Activated CD4-positive, alpha-beta T cell treated with anti-CD3 and anti-CD28 coated beads for 36 hours (primary cell): ENCODE measurements at regions of chr17 and their contacts with region 1.

Region 1: DNA sequence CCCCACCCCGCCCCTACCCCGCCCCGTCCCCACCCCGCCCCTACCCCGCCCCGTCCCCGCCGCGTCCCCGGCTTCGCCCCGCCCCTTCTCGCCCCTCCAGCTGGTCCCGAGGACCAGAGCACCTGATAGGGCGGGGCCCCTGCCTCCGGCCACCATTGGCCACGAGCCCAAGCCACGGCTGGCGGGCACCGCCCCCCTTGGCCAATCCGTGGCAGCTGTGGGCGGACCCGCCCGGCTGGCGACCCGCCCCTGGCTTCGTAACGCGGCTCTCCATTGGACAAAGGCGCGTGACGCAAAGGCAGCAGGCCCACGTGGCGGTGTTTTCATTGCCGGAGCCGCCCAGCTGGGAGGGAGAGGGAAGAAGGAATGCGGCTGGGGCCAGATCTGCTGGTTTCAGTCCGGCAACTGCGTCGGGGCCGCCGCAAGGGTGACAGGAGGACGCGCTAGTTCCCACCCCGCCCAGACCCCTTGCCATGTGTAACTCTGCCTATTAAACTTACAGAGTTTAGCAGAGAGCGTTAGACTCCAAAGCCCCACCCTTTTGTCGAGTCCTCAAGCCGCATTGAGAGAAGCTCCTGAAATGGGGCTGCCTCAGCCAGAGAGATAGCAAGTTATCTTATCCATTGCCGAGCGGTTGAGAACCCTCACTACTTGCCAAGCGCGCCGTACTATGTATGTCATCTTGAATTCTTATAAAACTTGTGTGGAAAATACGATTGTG is 403 bp upstream of the WIPI1 start:
- DNase-seq: peak; percentile 99
- ATAC-seq: peak; percentile 87
- H3K4me3 Mint-ChIP-seq: peak overlapping the region; percentile 64
- H3K27ac Mint-ChIP-seq: peak overlapping the region; percentile 64
- H3K4me1 Mint-ChIP-seq: peaks cover 61% of the 10 kb centered on the region
- H3K27me3 Mint-ChIP-seq: no peaks in the 10 kb centered on the region

Region 2: GRCh38 chr17:67717624-67718329 is 739.9 kb before region 1 on chr17 and contains the start of gene NOL11:
- CTCF ChIA-PET with region 1: no interaction called
- POLR2A ChIA-PET with region 1: no interaction called
- intact Hi-C with region 1: loop called (anchors 5 kb)
- DNase-seq: peak; percentile 100
- ATAC-seq: peak; percentile 96
- H3K4me3 Mint-ChIP-seq: peak within 1 kb of the TSS; percentile 88
- H3K27ac Mint-ChIP-seq: peak within 1 kb of the TSS; percentile 98
- H3K4me1 Mint-ChIP-seq: peaks cover 19% of the 10 kb centered on the region
- H3K27me3 Mint-ChIP-seq: no peaks in the 10 kb centered on the region
- total RNA-seq, gene NOL11: 79.3 to 79.7 TPM

Region 3: DNA sequence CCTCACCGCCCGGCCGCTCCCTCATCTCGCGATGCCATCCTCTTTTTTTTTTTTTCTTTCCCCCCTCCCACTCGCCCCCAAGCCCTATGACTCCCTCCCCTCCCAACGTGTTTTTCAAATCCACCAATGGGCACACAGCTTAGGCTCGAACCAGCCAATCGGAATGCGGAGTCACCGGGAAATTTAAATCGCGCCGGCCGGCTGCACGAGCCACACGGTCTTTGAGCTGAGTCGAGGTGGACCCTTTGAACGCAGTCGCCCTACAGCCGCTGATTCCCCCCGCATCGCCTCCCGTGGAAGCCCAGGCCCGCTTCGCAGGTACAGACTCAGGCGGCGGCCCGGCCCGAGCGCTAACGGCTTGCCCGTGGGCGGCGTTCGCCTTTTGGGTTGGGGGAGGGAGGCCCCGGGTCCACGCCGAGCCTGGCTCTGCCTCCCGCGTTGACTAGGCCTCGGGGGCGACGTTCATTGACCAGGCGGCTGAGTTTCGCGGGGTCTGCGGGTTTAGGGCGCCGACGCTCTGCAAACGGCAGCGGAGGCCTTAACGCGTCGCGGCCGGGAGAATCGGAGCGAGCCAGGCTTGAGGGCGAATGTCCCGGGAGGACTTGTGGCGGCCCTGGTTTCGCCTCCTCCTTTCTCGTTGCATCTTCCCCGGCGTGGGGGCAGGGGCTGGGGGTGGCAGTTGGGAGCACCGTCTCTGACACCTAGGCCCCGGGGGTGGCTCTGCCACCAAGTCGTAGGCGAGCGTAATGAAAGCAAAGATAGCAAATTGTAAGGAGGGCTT is 422.0 kb before region 1 on chr17 and contains the start of gene KPNA2:
- CTCF ChIA-PET with region 1: no interaction called
- POLR2A ChIA-PET with region 1: interaction called, 6 read pairs
- intact Hi-C with region 1: loop called in 1 of 2 experiments (anchors 1 kb)
- DNase-seq: peak; percentile 93
- ATAC-seq: peak; percentile 91
- H3K4me3 Mint-ChIP-seq: peak within 1 kb of the TSS; percentile 96
- H3K27ac Mint-ChIP-seq: peak within 1 kb of the TSS; percentile 97
- H3K4me1 Mint-ChIP-seq: peaks cover 18% of the 10 kb centered on the region
- H3K27me3 Mint-ChIP-seq: no peaks in the 10 kb centered on the region
- total RNA-seq, gene KPNA2: 186 to 190 TPM

Region 4: DNA sequence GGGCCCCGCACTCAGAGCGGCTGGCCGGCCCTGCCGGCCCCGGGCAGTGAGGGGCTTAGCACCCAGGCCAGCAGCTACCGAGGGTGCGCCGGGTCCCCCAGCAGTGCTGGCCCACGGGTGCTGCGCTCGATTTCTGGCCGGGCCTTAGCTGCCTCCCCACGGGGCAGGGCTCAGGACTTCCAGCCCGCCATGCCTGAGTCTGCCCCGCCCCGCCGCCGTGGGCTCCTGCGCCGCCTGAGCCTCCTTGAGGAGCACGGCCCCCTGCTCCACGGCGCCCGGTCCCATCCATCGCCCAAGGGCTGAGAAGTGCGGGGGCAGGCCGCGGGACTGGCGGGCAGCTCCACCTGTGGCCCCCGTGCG is 277.8 kb before region 1 on chr17:
- CTCF ChIA-PET with region 1: interaction called, 5 read pairs
- POLR2A ChIA-PET with region 1: interaction called, 4 read pairs
- intact Hi-C with region 1: loop called in 1 of 2 experiments (anchors 2 kb)
- DNase-seq: no peak
- ATAC-seq: no peak
- H3K4me3 Mint-ChIP-seq: no peak overlapping the region
- H3K27ac Mint-ChIP-seq: no peak overlapping the region
- H3K4me1 Mint-ChIP-seq: peaks cover 41% of the 10 kb centered on the region
- H3K27me3 Mint-ChIP-seq: no peaks in the 10 kb centered on the region

Region 5: GRCh38 chr17:68291844-68292695 is 165.6 kb before region 1 on chr17:
- CTCF ChIA-PET with region 1: interaction called, 4 read pairs
- POLR2A ChIA-PET with region 1: interaction called, 6 read pairs
- intact Hi-C with region 1: loop called in 1 of 2 experiments (anchors 1 kb)
- DNase-seq: peak; percentile 92
- ATAC-seq: peak; percentile 71
- H3K4me3 Mint-ChIP-seq: peak overlapping the region; percentile 77
- H3K27ac Mint-ChIP-seq: peak overlapping the region; percentile 61
- H3K4me1 Mint-ChIP-seq: peaks cover 69% of the 10 kb centered on the region
- H3K27me3 Mint-ChIP-seq: no peaks in the 10 kb centered on the region

Region 6: DNA sequence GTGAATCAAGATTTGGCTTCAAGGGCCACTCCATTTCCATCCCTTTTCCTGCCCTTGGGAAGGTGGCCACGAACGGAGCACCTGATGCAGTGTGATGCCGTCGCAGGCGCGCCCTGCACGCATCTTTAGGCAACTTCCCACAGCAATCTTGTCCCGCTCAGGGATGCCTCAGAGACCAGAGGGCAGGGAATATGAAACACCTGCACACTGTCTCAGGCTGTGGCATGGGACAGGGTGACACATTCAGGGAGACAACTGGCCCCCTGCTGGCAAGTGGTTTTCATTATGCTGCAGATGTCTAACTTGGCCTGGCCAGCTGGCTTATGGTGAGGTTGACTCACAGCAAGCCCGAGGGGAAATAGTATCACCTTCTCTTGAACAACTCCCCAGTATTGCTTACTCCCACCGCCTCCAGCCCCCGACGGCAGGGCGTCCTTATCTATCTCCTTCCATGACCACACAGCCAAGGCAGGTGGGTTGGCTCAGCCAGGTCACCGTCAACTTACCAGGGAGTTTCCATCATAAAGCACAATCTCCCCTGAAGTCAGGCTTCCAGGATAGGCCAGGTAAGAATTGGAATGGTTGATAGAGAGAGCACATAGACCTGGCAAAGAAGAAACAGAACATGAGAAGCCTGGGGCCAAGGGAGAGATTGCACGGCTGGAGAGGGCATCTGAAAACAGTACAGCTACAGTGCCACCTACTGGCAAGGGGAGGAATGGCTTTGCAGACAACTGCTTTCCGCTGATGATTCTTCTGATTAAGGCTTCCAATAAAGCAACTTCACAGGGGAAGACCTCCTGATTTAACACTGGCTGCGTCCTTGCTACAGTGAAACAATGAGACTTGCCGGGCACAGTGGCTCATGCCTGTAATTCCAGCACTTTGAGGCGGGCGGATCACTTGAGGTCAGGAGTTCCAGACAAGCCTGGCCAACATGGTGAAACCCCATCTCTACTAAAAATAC is 21.5 kb before region 1 on chr17:
- CTCF ChIA-PET with region 1: interaction called, 26 read pairs
- POLR2A ChIA-PET with region 1: interaction called, 3 read pairs
- intact Hi-C with region 1: loop called in 1 of 2 experiments (anchors 1 kb)
- DNase-seq: peak; percentile 91
- ATAC-seq: peak; percentile 80
- H3K4me3 Mint-ChIP-seq: no peak overlapping the region
- H3K27ac Mint-ChIP-seq: peak overlapping the region; percentile 79
- H3K4me1 Mint-ChIP-seq: peaks cover 44% of the 10 kb centered on the region
- H3K27me3 Mint-ChIP-seq: no peaks in the 10 kb centered on the region

Region 7: GRCh38 chr17:68627956-68628575 is 170.4 kb after region 1 on chr17:
- CTCF ChIA-PET with region 1: no interaction called
- POLR2A ChIA-PET with region 1: no interaction called
- intact Hi-C with region 1: no loop called
- DNase-seq: no peak
- ATAC-seq: no peak
- H3K4me3 Mint-ChIP-seq: no peak overlapping the region
- H3K27ac Mint-ChIP-seq: no peak overlapping the region
- H3K4me1 Mint-ChIP-seq: no peaks in the 10 kb centered on the region
- H3K27me3 Mint-ChIP-seq: peaks cover 7% of the 10 kb centered on the region

Region 8: GRCh38 chr17:68954863-68955841 is 497.5 kb after region 1 on chr17 and contains the start of gene ABCA8:
- CTCF ChIA-PET with region 1: no interaction called
- POLR2A ChIA-PET with region 1: no interaction called
- intact Hi-C with region 1: no loop called
- DNase-seq: no peak
- ATAC-seq: no peak
- H3K4me3 Mint-ChIP-seq: no peak within 1 kb of the TSS
- H3K27ac Mint-ChIP-seq: no peak within 1 kb of the TSS
- H3K4me1 Mint-ChIP-seq: no peaks in the 10 kb centered on the region
- H3K27me3 Mint-ChIP-seq: no peaks in the 10 kb centered on the region
- total RNA-seq, gene ABCA8: not detected